ENCODE measurements at regions of chr14 and their contacts with region 1.

Region 1: GRCh38 chr14:105368965-105369652 is 29.2 kb upstream of the TEX22 start:
- DNase-seq: no peak
- ATAC-seq: no peak
- H3K4me3 Mint-ChIP-seq: no peak overlapping the region
- H3K27ac Mint-ChIP-seq: no peak overlapping the region
- H3K4me1 Mint-ChIP-seq: peaks cover 4% of the 10 kb centered on the region
- H3K27me3 Mint-ChIP-seq: no peaks in the 10 kb centered on the region

Region 2: DNA sequence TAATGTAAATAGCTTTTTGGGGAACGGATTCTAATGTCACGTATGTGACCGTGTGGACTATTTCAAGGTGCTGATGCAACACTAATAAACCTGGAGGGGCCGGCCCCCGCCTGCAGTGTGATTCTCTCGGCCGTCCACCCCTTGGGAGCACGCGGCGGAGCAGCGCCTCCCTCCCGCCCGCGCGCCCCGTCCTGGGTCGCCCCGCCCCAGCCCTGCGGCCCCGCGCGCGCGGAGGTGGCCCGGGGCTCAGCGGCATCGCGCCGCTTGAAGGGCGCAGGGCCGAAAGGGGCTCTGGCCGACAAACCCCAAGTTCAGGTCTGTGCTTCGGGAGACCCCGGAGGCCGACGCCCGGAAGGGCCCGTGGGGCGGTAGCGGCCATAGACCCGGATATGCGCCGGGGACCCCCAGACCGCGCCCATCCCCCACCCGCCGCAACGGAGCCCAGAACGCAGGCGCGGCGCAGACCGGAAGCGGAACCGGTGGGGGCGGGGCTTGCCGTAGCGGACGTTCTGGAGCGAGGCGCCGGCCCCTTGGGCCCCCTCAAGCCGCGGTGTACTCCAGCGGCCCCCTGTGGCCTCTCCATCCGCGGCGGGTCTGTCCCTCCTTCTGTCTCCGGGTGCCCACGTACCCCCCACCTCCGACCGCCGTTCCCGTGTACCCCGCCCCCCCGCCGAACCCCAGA is 29.1 kb after region 1 on chr14 and contains the start of gene TEX22:
- CTCF ChIA-PET with region 1: interaction called, 17 read pairs
- POLR2A ChIA-PET with region 1: no interaction called
- DNase-seq: peak; percentile 93
- ATAC-seq: peak; percentile 88
- H3K4me3 Mint-ChIP-seq: peak within 1 kb of the TSS; percentile 95
- H3K27ac Mint-ChIP-seq: peak within 1 kb of the TSS; percentile 94
- H3K4me1 Mint-ChIP-seq: peaks cover 39% of the 10 kb centered on the region
- H3K27me3 Mint-ChIP-seq: no peaks in the 10 kb centered on the region
- total RNA-seq, gene TEX22: 1.9 to 2.4 TPM

Region 3: GRCh38 chr14:105414456-105415371 is 45.6 kb after region 1 on chr14:
- CTCF ChIA-PET with region 1: interaction called, 10 read pairs
- POLR2A ChIA-PET with region 1: no interaction called
- DNase-seq: peak; percentile 62
- ATAC-seq: peak; percentile 81
- H3K4me3 Mint-ChIP-seq: peak overlapping the region; percentile 58
- H3K27ac Mint-ChIP-seq: peak overlapping the region; percentile 25
- H3K4me1 Mint-ChIP-seq: peaks cover 23% of the 10 kb centered on the region
- H3K27me3 Mint-ChIP-seq: peaks cover 27% of the 10 kb centered on the region

Region 4: DNA sequence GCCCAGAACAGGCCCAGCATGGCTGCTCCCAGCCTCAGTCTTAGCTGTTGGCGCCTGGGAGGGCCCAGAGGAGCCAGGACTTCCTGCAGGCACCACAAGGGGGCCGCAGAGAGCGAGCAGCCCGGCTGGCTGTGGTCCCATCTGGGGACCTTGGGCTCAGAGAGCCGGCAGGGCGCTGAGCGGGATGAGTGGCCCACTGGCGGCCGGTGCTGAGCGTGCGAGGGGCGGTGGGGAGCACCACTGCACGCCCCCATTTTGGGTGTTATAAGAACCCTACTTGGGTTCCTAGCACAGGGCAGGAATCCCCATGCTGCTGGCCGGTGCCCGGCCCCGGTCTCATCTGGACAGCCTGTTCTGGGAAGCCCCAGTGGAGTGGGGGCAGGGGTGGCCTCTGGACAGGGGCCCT is 79.6 kb after region 1 on chr14:
- CTCF ChIA-PET with region 1: interaction called, 15 read pairs
- POLR2A ChIA-PET with region 1: no interaction called
- DNase-seq: peak; percentile 63
- ATAC-seq: peak; percentile 90
- H3K4me3 Mint-ChIP-seq: no peak overlapping the region
- H3K27ac Mint-ChIP-seq: no peak overlapping the region
- H3K4me1 Mint-ChIP-seq: no peaks in the 10 kb centered on the region
- H3K27me3 Mint-ChIP-seq: no peaks in the 10 kb centered on the region

Region 5: GRCh38 chr14:105480952-105481801 is 112.1 kb after region 1 on chr14:
- CTCF ChIA-PET with region 1: interaction called, 21 read pairs
- POLR2A ChIA-PET with region 1: interaction called, 3 read pairs
- DNase-seq: peak; percentile 91
- ATAC-seq: peak; percentile 45
- H3K4me3 Mint-ChIP-seq: peak overlapping the region; percentile 55
- H3K27ac Mint-ChIP-seq: peak overlapping the region; percentile 98
- H3K4me1 Mint-ChIP-seq: peaks cover 49% of the 10 kb centered on the region
- H3K27me3 Mint-ChIP-seq: peaks cover 23% of the 10 kb centered on the region

Region 6: DNA sequence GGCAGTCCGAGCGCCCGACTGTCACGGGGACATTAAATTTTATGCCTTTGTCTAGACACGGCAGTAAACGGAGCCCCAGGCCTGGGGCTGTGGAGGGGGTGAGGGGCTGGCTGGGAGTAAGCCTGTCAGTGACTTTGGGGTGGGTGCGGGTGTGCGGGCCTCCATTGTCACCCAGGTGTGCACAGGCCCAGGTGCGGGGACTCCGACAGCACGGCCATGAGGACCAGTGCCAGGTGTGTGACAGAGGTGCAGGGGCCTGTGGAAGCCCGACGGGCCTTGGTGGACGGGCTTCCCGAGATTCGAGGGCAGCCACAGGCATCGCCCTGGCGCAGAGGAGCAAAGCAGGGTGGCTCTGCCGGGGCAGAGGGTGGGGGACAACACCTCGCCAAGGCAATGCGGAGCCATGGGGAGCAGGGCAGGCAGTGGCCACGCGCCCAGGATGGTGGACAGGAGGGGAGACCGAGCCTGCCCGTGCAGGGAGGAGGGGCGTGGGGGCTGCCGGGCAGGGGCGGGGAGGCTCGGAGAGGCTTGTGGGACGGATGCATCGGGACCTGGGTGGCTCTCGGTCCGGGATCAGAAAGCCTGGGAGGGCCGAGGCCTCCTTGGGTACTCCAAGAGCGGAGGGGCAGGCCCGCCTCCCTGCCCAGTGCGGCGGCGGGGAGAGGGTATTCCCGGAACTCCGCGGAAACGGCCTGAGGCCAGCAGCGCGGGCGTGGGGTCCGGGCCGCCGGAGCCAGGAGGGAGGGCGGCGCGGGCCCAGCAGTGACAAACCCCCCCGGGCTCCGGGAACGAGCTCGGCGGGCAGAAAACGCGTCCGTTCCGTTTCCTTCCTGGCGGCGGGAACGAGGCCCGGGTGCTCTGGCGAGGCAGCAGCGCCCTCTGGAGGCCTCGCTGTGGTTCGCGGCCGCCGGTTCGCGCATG is 158.8 kb after region 1 on chr14:
- CTCF ChIA-PET with region 1: interaction called, 16 read pairs
- POLR2A ChIA-PET with region 1: no interaction called
- DNase-seq: peak; percentile 86
- ATAC-seq: peak; percentile 73
- H3K4me3 Mint-ChIP-seq: peak overlapping the region; percentile 73
- H3K27ac Mint-ChIP-seq: peak overlapping the region; percentile 75
- H3K4me1 Mint-ChIP-seq: peaks cover 37% of the 10 kb centered on the region
- H3K27me3 Mint-ChIP-seq: peaks cover 26% of the 10 kb centered on the region

Measured in activated CD8-positive, alpha-beta T cell treated with anti-CD3 and anti-CD28 coated beads, Interleukin-2, amount 10 ng/mL, durations not matched to agents 7 days and 5 days (primary cell).